Natural killer cell (primary cell): ENCODE measurements at regions of chr11 and their contacts with region 1.

Region 1: GRCh38 chr11:57667736-57668435 is at the start of gene ZDHHC5:
- DNase-seq: peak; percentile 99 to 100
- ATAC-seq: peak; percentile 79 to 95 (median 82)
- H3K4me3 ChIP-seq: peak within 1 kb of the TSS; percentile 97
- H3K4me3 Mint-ChIP-seq: peak within 1 kb of the TSS; percentile 97
- H3K27ac ChIP-seq: peak within 1 kb of the TSS; percentile 95
- H3K27ac Mint-ChIP-seq: peak within 1 kb of the TSS; percentile 97 to 98
- H3K4me1 ChIP-seq: peaks cover 19% of the 10 kb centered on the region
- H3K4me1 Mint-ChIP-seq: peaks cover 44 to 58% of the 10 kb centered on the region in 2 donors
- H3K27me3 ChIP-seq: no peaks in the 10 kb centered on the region
- H3K27me3 Mint-ChIP-seq: no peaks in the 10 kb centered on the region
- CTCF ChIP-seq: peak; percentile 53
- total RNA-seq, gene ZDHHC5: 46.1 to 64.0 (median 55.5) TPM

Region 2: GRCh38 chr11:56522008-56522407 is 1145.9 kb before region 1 on chr11:
- intact Hi-C with region 1: no loop called
- DNase-seq: no peak
- ATAC-seq: no peak
- H3K4me3 ChIP-seq: no peak overlapping the region
- H3K4me3 Mint-ChIP-seq: no peak overlapping the region
- H3K27ac ChIP-seq: no peak overlapping the region
- H3K27ac Mint-ChIP-seq: no peak overlapping the region
- H3K4me1 ChIP-seq: no peaks in the 10 kb centered on the region
- H3K4me1 Mint-ChIP-seq: no peaks in the 10 kb centered on the region
- H3K27me3 ChIP-seq: no peaks in the 10 kb centered on the region
- H3K27me3 Mint-ChIP-seq: no peaks in the 10 kb centered on the region
- CTCF ChIP-seq: no peak

Region 3: GRCh38 chr11:57335343-57336110 is 332.4 kb before region 1 on chr11 and contains the start of gene SSRP1:
- intact Hi-C with region 1: loop called (anchors 5 kb)
- DNase-seq: peak; percentile 78 to 94
- ATAC-seq: peak; percentile 94 to 98 (median 98)
- H3K4me3 ChIP-seq: peak within 1 kb of the TSS; percentile 65
- H3K4me3 Mint-ChIP-seq: peak within 1 kb of the TSS; percentile 99
- H3K27ac ChIP-seq: peak within 1 kb of the TSS; percentile 95
- H3K27ac Mint-ChIP-seq: peak within 1 kb of the TSS; percentile 97 to 99
- H3K4me1 ChIP-seq: peaks cover 19% of the 10 kb centered on the region
- H3K4me1 Mint-ChIP-seq: peaks cover 35% of the 10 kb centered on the region in 2 donors
- H3K27me3 ChIP-seq: no peaks in the 10 kb centered on the region
- H3K27me3 Mint-ChIP-seq: peaks cover 0 to 11% of the 10 kb centered on the region in 2 donors
- CTCF ChIP-seq: no peak
- total RNA-seq, gene SSRP1: 45.5 to 50.0 (median 47.1) TPM

Region 4: GRCh38 chr11:57649826-57650738 is 17.8 kb before region 1 on chr11 and contains the start of gene YPEL4:
- intact Hi-C with region 1: loop called (anchors 1 kb)
- DNase-seq: peak; percentile 64 to 91
- ATAC-seq: peak; percentile 83 to 91 (median 86)
- H3K4me3 ChIP-seq: peak within 1 kb of the TSS; percentile 21
- H3K4me3 Mint-ChIP-seq: peak within 1 kb of the TSS; percentile 86
- H3K27ac ChIP-seq: no peak within 1 kb of the TSS
- H3K27ac Mint-ChIP-seq: peak within 1 kb of the TSS; percentile 78 to 87
- H3K4me1 ChIP-seq: peaks cover 36% of the 10 kb centered on the region
- H3K4me1 Mint-ChIP-seq: peaks cover 35 to 47% of the 10 kb centered on the region in 2 donors
- H3K27me3 ChIP-seq: peaks cover 35% of the 10 kb centered on the region
- H3K27me3 Mint-ChIP-seq: peaks cover 30 to 36% of the 10 kb centered on the region in 2 donors
- CTCF ChIP-seq: no peak
- total RNA-seq, gene YPEL4: 1.2 to 1.3 (median 1.2) TPM

Region 5: DNA sequence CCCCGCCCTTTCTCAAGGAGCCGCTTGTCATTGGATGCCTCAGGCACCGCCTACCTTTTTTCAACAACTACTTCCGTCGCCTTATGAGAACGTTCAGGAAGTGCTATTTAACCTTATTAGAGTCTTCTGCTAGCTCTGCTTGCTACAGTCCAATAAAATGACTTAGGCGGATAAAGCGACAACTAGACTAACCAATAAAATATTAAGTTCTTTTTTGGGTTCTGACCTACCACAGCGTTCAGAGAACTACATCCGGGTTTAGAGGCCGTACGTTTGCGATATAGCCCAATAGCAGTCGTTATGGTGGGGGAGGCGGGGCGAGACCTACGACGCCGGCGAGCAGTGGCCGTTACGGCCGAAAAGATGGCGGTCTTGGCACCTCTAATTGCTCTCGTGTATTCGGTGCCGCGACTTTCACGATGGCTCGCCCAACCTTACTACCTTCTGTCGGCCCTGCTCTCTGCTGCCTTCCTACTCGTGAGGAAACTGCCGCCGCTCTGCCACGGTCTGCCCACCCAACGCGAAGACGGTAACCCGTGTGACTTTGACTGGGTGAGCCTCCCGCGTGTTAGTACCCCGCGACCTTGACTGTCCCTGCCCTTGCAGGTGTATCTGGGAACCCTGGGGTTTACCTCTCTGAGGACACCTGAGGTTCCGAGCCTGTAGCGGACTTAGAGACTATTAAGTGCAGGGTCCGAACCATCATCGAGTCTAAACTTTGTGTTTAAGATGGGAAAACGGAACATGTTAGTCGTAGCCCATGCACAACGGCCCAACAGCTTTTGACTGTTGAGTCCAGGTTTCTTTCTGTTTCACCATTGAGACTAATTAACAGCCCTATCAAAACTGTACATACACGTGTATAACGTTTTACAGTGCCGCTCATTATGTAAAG is 44.6 kb after region 1 on chr11 and contains the start of gene TMX2:
- intact Hi-C with region 1: loop called (anchors 1 kb)
- DNase-seq: peak; percentile 86 to 96
- ATAC-seq: peak; percentile 88 to 96 (median 89)
- H3K4me3 ChIP-seq: peak within 1 kb of the TSS; percentile 72
- H3K4me3 Mint-ChIP-seq: peak within 1 kb of the TSS; percentile 96
- H3K27ac ChIP-seq: peak within 1 kb of the TSS; percentile 73
- H3K27ac Mint-ChIP-seq: peak within 1 kb of the TSS; percentile 93 to 94
- H3K4me1 ChIP-seq: peaks cover 19% of the 10 kb centered on the region
- H3K4me1 Mint-ChIP-seq: peaks cover 36 to 41% of the 10 kb centered on the region in 2 donors
- H3K27me3 ChIP-seq: no peaks in the 10 kb centered on the region
- H3K27me3 Mint-ChIP-seq: no peaks in the 10 kb centered on the region
- CTCF ChIP-seq: no peak
- total RNA-seq, gene TMX2: 43.6 to 70.4 (median 45.7) TPM

Region 6: GRCh38 chr11:57792060-57792541 is 124.2 kb after region 1 on chr11:
- intact Hi-C with region 1: loop called (anchors 1 kb)
- DNase-seq: peak; percentile 75 to 95
- ATAC-seq: peak; percentile 92 to 97 (median 93)
- H3K4me3 ChIP-seq: no peak overlapping the region
- H3K4me3 Mint-ChIP-seq: peak overlapping the region; percentile 48
- H3K27ac ChIP-seq: peak overlapping the region; percentile 57
- H3K27ac Mint-ChIP-seq: peak overlapping the region; percentile 86
- H3K4me1 ChIP-seq: peaks cover 30% of the 10 kb centered on the region
- H3K4me1 Mint-ChIP-seq: peaks cover 24 to 31% of the 10 kb centered on the region in 2 donors
- H3K27me3 ChIP-seq: no peaks in the 10 kb centered on the region
- H3K27me3 Mint-ChIP-seq: no peaks in the 10 kb centered on the region
- CTCF ChIP-seq: no peak